ENCODE measurements at regions of chr5 and their contacts with region 1.

Region 1: GRCh38 chr5:176410486-176411180 is 5.7 kb downstream of the CLTB start:
- DNase-seq: peak; percentile 81 to 87
- H3K4me3 ChIP-seq: peak overlapping the region; percentile 23; the same call in 1 of the 2 replicates
- H3K27ac ChIP-seq: peak overlapping the region; percentile 40; the same call in 1 of the 2 replicates
- H3K4me1 ChIP-seq: peaks cover 51% of the 10 kb centered on the region
- H3K27me3 ChIP-seq: no peaks in the 10 kb centered on the region
- CTCF ChIP-seq: peak; percentile 52; the same call in 1 of the 2 replicates

Region 2: DNA sequence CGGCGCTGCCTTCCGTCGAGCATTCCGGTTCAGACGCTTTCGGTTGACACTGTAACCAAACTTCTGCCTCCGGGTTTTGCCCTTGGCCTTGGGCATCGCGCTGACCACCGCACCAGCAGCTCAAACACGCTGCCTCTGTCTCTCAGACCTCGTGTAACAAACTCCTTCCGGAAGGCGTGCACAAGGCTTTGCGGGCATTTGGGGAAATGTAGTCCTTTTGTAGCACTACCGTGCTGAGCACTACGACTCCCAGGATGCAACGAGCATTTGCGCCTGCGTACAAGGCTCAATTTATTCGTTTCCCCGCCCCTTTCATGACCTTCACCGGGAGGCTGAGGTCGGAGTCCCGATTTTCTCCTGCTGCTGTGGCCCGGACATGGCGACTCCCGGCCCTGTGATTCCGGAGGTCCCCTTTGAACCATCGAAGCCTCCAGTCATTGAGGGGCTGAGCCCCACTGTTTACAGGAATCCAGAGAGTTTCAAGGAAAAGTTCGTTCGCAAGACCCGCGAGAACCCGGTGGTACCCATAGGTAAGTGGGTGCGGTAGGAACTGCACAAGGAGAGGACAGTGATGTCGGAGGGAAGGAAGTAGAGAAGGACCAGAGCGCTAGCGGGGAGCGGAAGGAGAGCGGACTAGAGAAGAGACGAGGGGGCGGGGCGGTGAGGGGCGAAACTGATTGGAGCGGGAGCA is 22.0 kb before region 1 on chr5 and contains the starts of genes HIGD2A and NOP16:
- CTCF ChIA-PET with region 1: no interaction called
- POLR2A ChIA-PET with region 1: no interaction called
- intact Hi-C with region 1: loop called (anchors 1 kb)
- DNase-seq: peak; percentile 95 to 98
- H3K4me3 ChIP-seq: peak within 1 kb of the TSS; percentile 74
- H3K27ac ChIP-seq: peak within 1 kb of the TSS; percentile 71
- H3K4me1 ChIP-seq: peaks cover 22% of the 10 kb centered on the region
- H3K27me3 ChIP-seq: no peaks in the 10 kb centered on the region
- CTCF ChIP-seq: no peak
- total RNA-seq, gene HIGD2A: 133 and 149 TPM in 2 replicates
- total RNA-seq, gene NOP16: 31.5 and 35.8 TPM in 2 replicates

Region 3: DNA sequence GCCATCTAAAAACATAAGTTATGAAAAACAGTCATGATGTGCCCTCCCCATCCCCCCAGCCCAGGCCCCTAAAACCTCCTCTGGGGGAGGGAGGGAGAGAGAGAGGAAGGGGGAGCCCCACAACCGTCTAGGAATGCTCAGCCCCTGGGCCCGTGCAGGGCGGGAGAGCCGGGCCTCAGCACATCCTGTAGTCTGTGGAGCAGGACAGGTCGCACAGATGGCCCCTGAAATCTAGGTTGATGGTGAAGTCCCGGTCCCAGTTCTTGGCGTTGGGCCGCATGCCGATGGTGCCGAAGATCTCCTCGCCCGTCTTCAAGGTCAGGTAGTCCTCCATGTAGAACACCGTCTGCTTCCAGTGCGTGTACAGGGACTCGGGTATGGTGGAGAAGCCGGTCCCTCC is 854.8 kb after region 1 on chr5:
- CTCF ChIA-PET with region 1: interaction called, 18 read pairs
- POLR2A ChIA-PET with region 1: no interaction called
- intact Hi-C with region 1: no loop called
- DNase-seq: no peak
- H3K4me3 ChIP-seq: no peak overlapping the region
- H3K27ac ChIP-seq: no peak overlapping the region
- H3K4me1 ChIP-seq: no peaks in the 10 kb centered on the region
- H3K27me3 ChIP-seq: no peaks in the 10 kb centered on the region
- CTCF ChIP-seq: no peak

Measured in PC-9 (cell line).